ENCODE measurements at regions of chr3 and their contacts with region 1.

Region 1: GRCh38 chr3:61371123-61371522 is 119.9 kb upstream of the FHIT start:
- DNase-seq: no peak
- ATAC-seq: no peak
- H3K4me3 ChIP-seq: no peak overlapping the region
- H3K27ac ChIP-seq: no peak overlapping the region
- H3K4me1 ChIP-seq: no peaks in the 10 kb centered on the region
- H3K27me3 ChIP-seq: no peaks in the 10 kb centered on the region
- CTCF ChIP-seq: peak; percentile 24 to 65 (median 53)

Region 2: DNA sequence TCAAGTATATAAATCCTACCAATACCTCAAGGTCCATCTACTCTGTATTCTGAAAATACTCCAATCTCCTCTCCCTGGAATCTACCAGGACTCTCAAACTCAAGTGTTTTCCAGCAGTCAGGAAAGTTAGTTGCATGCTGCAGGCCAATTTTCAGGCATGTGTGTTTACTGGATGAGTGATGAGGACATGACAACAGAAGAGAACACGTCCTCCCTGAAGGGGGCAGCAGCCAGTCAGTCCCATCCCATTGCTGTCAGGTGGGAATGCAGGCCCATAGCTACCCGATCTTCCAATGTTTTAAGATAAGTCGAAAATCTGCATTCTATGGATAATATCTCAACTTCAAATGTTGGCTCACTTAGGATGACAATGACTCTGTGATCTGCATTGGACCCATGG is 616.0 kb before region 1 on chr3:
- intact Hi-C with region 1: loop called in 1 of 10 experiments (anchors 10 kb)
- DNase-seq: no peak
- ATAC-seq: no peak
- H3K4me3 ChIP-seq: no peak overlapping the region
- H3K27ac ChIP-seq: no peak overlapping the region
- H3K4me1 ChIP-seq: peaks cover 0 to 11% (median 0%) of the 10 kb centered on the region in 9 donors
- H3K27me3 ChIP-seq: no peaks in the 10 kb centered on the region
- CTCF ChIP-seq: peak in 4 of 9 donors; percentile 12 to 39 (median 16)

Region 3: DNA sequence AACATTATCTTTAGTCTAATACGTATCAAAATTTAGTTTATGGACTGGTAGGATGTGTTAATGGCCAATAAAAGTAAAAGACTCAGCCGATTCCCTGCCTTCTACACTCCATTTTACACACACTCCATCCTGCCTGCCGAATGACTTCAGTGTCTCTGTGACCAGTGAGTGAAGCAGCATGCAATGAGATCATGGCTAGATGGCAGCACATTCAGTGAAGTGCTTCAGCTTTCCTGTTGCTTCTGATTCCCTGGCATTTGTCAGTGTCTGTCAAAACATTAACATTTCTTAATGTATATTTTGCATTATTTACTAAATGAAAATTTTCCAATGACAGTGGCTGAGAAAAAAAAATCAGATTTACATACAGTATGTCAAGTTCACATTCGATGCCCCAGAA is 531.9 kb before region 1 on chr3:
- intact Hi-C with region 1: no loop called
- DNase-seq: no peak
- ATAC-seq: no peak
- H3K4me3 ChIP-seq: no peak overlapping the region
- H3K27ac ChIP-seq: no peak overlapping the region
- H3K4me1 ChIP-seq: no peaks in the 10 kb centered on the region
- H3K27me3 ChIP-seq: no peaks in the 10 kb centered on the region
- CTCF ChIP-seq: peak in 4 of 9 donors; percentile 8 to 45 (median 32)

Measured in heart right ventricle (tissue), 16 donors.